Gastrocnemius medialis (tissue), 4 donors: ENCODE measurements at regions of chr1 and their contacts with region 1.

Region 1: DNA sequence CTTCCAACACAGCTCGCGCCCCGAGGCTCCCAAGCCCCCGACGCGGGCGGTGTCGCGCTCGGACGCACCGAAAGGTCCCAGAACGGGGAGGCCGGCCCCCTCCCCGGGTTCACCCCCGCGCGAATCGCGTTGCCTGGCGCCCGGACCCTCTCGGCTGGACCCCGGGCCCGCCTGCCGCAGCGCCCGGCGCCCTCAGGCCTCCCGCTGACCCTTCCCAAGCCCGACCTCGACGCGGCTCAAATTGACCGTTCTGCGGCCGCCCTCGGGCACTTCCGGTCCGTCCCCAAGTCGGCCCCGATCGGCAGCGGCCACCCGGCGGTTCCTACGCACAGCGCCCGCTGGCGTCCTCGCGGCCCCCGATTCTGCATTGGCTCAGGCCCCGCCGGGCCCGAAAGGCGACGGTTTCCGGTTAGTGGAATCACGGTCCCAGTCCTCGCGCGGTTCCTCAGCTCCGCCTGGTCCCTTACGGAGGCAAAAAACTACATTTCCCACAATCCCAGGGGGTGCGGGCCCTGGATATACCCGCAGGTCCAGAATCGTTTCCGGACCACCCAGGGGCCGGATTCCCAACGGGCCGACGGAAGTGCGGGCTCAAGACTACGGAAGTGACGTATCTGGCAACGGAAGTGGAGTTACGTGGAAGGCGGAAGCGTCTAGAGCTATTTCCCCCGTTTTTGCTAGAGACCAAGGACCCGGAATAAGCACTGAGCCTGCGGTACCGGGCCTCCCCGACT is at the start of gene AURKAIP1:
- DNase-seq: peak; percentile 99
- ATAC-seq: peak; percentile 95 to 97
- H3K4me3 ChIP-seq: peak within 1 kb of the TSS; percentile 80 to 95 (median 94)
- H3K27ac ChIP-seq: peak within 1 kb of the TSS; percentile 83 to 96 (median 94)
- H3K4me1 ChIP-seq: peaks cover 28 to 38% of the 10 kb centered on the region in 2 donors
- H3K27me3 ChIP-seq: no peaks in the 10 kb centered on the region
- CTCF ChIP-seq: peak; percentile 23 to 37 (median 30)
- POLR2A ChIP-seq: peak; percentile 67 to 79
- total RNA-seq, gene AURKAIP1: 165 to 450 (median 234) TPM

Region 2: GRCh38 chr1:1115786-1116700 is 259.1 kb before region 1 on chr1 and contains the start of gene C1orf159:
- in situ Hi-C with region 1: no loop called
- intact Hi-C with region 1: loop called (anchors 1 kb)
- DNase-seq: peak; percentile 96 to 99
- ATAC-seq: peak; percentile 99
- H3K4me3 ChIP-seq: peak within 1 kb of the TSS; percentile 57 to 97 (median 76)
- H3K27ac ChIP-seq: peak within 1 kb of the TSS; percentile 63 to 85 (median 74)
- H3K4me1 ChIP-seq: peaks cover 3 to 7% of the 10 kb centered on the region in 2 donors
- H3K27me3 ChIP-seq: peaks cover 0 to 14% (median under 1%) of the 10 kb centered on the region in 3 donors
- CTCF ChIP-seq: no peak
- POLR2A ChIP-seq: no peak
- total RNA-seq, gene C1orf159: 2.8 to 6.4 (median 5.3) TPM

Region 3: DNA sequence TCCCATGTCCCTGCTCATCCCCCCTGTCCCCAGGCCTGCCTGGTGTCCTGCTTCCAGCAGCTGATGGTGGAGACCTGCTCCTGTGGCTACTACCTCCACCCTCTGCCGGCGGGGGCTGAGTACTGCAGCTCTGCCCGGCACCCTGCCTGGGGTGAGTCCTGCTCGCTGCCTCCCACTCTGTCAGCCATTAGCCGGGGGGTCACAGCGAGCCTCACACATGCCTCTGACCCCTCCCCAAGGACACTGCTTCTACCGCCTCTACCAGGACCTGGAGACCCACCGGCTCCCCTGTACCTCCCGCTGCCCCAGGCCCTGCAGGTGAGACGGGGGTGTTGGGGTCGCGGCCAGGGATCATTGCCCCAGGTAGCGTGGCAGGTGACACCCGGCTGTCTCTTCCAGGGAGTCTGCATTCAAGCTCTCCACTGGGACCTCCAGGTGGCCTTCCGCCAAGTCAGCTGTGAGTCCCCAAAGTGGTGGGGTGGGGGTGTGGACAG is 84.8 kb before region 1 on chr1:
- in situ Hi-C with region 1: no loop called
- intact Hi-C with region 1: no loop called
- DNase-seq: no peak
- ATAC-seq: peak in 1 of 2 donors; percentile 44
- H3K4me3 ChIP-seq: no peak overlapping the region
- H3K27ac ChIP-seq: no peak overlapping the region
- H3K4me1 ChIP-seq: no peaks in the 10 kb centered on the region
- H3K27me3 ChIP-seq: peaks cover 15 to 26% (median 24%) of the 10 kb centered on the region in 3 donors
- CTCF ChIP-seq: peak; percentile 10 to 72 (median 60)
- POLR2A ChIP-seq: no peak

Region 4: DNA sequence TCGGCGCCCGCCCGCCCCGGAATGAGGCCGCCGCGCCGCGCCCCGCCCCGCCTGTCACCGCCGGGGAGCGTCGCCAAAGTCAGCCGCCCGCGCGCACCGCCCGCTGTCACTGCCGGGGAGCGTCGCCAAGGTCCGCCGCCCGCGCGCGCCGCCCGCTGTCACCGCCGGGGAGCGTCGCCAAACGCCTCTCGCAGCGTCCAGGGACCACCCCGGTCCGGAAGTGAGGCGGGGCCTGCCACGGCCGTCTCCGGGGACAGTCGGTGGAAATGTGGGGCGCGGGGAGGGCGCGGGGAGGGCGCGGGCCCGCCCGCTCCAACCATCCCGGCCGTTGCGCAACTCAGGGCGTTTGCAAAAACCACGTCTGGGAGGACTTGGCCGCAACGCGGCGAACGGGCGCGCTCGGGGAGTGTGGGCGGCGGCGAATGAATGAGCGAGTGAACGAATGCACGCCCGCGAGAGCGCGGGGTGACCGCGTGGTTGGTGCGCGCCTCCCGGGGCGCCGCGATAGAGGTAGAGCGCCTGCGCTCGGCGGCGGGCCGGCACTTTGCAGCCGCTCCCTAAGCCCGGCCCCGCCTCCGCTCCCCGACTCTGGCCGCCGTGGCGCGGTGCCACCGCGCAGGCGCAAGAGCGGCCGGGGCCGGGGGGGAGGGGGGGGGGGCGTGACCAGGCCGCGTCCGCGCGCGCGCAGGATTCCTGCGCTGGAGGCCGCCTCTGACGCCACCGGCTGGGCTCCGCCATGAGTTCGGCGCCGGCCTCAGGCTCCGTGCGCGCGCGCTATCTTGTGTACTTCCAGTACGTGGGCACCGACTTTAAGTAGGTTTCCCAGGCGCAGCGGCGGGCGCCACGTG is 67.0 kb before region 1 on chr1 and contains the starts of genes ACAP3 and PUSL1:
- in situ Hi-C with region 1: no loop called
- intact Hi-C with region 1: loop called (anchors 1 kb)
- DNase-seq: peak; percentile 73 to 89
- ATAC-seq: peak; percentile 72 to 77
- H3K4me3 ChIP-seq: peak within 1 kb of the TSS; percentile 67 to 92 (median 75)
- H3K27ac ChIP-seq: peak within 1 kb of the TSS; percentile 88 to 100 (median 96)
- H3K4me1 ChIP-seq: peaks cover 38 to 50% of the 10 kb centered on the region in 2 donors
- H3K27me3 ChIP-seq: no peaks in the 10 kb centered on the region
- CTCF ChIP-seq: peak in 3 of 5 experiments; percentile 20 to 51 (median 30)
- POLR2A ChIP-seq: peak in 1 of 2 donors; percentile 47
- total RNA-seq, gene ACAP3: 18.4 to 31.9 (median 25.8) TPM
- total RNA-seq, gene PUSL1: 6.2 to 13.1 (median 9.5) TPM

Region 5: DNA sequence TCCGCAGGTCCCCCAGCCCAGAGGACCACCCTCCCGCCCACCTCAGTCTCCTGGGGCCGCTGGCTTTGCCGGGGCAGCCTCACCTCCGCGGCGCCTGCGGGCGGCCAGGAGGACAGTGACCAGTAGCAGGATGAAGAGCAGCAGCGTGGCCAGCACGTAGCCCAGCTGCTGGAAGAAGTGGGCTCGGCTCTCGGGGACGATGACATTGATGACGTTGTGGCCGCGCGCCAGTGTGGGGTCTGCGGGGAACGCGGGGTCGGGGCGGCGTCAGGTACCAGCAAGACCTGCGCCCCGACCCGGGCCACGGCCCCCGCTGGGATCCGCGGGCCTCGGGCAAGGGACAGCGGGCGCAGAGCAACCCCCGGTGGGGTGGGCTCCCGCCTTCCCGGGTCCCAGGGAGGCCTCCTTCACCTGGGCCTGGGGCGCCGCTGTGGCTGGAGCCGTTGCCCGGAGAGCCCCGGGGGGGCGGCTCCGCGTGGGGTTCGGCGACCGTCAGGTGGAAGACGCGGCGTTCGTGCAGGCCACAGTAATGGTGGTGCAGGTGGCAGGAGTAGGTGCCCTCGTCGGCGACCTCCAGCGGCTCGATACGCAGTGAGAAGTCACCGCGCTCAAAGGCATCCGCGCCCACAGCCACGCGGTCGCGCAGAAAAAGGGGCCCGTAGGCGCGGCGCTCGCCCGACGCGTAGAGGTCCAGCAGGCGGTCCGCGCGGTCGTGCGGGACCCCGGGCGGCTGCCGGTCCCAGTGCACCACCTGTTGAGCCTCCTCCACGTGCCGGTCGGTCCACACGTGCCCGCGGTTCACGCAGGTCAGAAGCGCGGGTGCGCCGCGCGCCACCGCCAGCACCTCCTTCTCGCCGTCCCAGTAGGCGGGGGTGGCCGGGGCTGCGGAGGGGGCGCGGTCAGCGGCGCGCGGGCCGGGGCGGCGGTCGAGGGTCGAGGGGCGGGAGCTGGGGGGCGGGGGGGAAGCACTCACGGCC is 20.5 kb before region 1 on chr1:
- in situ Hi-C with region 1: no loop called
- intact Hi-C with region 1: loop called (anchors 1 kb)
- DNase-seq: peak in 1 of 2 donors; percentile 12
- ATAC-seq: no peak
- H3K4me3 ChIP-seq: no peak overlapping the region
- H3K27ac ChIP-seq: peak overlapping the region in 2 of 4 donors; percentile 9 to 28
- H3K4me1 ChIP-seq: peaks cover 13 to 38% of the 10 kb centered on the region in 2 donors
- H3K27me3 ChIP-seq: peaks cover 8 to 33% (median 28%) of the 10 kb centered on the region in 3 donors
- CTCF ChIP-seq: no peak
- POLR2A ChIP-seq: no peak

Region 6: DNA sequence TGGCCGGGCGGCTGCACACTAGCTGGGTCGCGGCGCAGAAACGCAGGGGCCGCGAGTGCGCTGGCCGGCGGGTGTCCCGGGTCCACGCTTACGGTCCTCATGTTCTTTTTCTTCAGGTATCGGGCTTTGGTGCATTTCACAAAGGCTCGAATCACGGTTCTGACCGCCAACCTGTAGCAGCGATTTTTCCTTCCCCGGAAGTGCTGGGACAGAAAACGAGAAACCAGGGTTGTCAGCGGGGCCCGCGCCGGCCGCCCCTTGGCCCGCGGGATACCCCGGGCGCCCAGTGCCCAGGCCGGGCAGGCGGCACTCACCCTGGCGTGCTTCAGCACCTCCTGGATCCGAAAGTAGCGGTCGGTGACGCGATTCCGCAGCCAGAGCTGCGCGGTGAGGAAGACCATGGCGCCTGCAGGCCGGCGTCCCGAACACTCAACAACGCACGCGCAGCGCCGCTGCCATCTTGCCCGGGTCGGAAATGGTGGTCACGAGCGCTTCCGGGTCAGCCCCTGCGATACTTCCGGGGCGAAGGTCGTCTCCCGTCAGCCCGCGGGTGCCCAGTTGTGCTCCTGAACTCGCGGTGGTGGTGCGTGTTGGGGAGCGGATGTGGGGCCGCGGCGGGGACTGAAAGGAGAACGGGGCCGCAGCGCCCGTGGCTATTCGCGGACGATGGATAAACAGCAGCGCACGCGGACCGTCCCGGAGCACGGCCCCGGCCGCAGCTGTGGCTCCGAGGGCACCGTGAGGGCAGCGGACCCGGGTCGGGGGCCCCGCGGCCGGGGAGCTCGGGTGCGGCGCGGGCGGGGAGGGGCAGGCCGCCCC is 31.9 kb after region 1 on chr1 and contains the start of gene MRPL20:
- in situ Hi-C with region 1: no loop called
- intact Hi-C with region 1: loop called (anchors 1 kb)
- DNase-seq: peak; percentile 91 to 93
- ATAC-seq: peak; percentile 97 to 98
- H3K4me3 ChIP-seq: peak within 1 kb of the TSS; percentile 85 to 100 (median 93)
- H3K27ac ChIP-seq: peak within 1 kb of the TSS; percentile 79 to 95 (median 84)
- H3K4me1 ChIP-seq: peaks cover 35% of the 10 kb centered on the region in 2 donors
- H3K27me3 ChIP-seq: no peaks in the 10 kb centered on the region
- CTCF ChIP-seq: no peak
- POLR2A ChIP-seq: peak; percentile 62 to 86
- total RNA-seq, gene MRPL20: 167 to 260 (median 203) TPM